ENCODE measurements at regions of chr7 and their contacts with region 1.

Region 1: GRCh38 chr7:24572997-24573625 is at the start of gene PALS2:
- DNase-seq: peak; percentile 81 to 87 (median 83)
- H3K4me3 ChIP-seq: peak within 1 kb of the TSS; percentile 62 to 66
- H3K4me3 Mint-ChIP-seq: peak within 1 kb of the TSS; percentile 92 to 99 (median 94)
- H3K27ac ChIP-seq: peak within 1 kb of the TSS; percentile 56
- H3K27ac Mint-ChIP-seq: peak within 1 kb of the TSS; percentile 86 to 95 (median 92)
- H3K4me1 ChIP-seq: peaks cover 32% of the 10 kb centered on the region
- H3K4me1 Mint-ChIP-seq: peaks cover 20 to 38% (median 28%) of the 10 kb centered on the region in 4 donors
- H3K27me3 ChIP-seq: no peaks in the 10 kb centered on the region
- H3K27me3 Mint-ChIP-seq: peaks cover 2 to 4% of the 10 kb centered on the region in 2 donors
- total RNA-seq, gene PALS2: 32.9 to 50.1 TPM

Region 2: GRCh38 chr7:22822486-22823141 is 1750.5 kb before region 1 on chr7 and contains the start of gene TOMM7:
- CTCF ChIA-PET with region 1: no interaction called
- POLR2A ChIA-PET with region 1: no interaction called
- intact Hi-C with region 1: loop called (anchors 5 kb)
- DNase-seq: peak; percentile 84 to 92 (median 91)
- H3K4me3 ChIP-seq: peak within 1 kb of the TSS; percentile 83 to 98
- H3K4me3 Mint-ChIP-seq: peak within 1 kb of the TSS; percentile 94 to 99 (median 98)
- H3K27ac ChIP-seq: peak within 1 kb of the TSS; percentile 85
- H3K27ac Mint-ChIP-seq: peak within 1 kb of the TSS; percentile 94 to 100 (median 98)
- H3K4me1 ChIP-seq: peaks cover 40% of the 10 kb centered on the region
- H3K4me1 Mint-ChIP-seq: peaks cover 19 to 50% (median 33%) of the 10 kb centered on the region in 4 donors
- H3K27me3 ChIP-seq: no peaks in the 10 kb centered on the region
- H3K27me3 Mint-ChIP-seq: peaks cover 5 to 17% of the 10 kb centered on the region in 2 donors
- total RNA-seq, gene TOMM7: 686 to 701 TPM

Region 3: GRCh38 chr7:23105644-23106056 is 1467.5 kb before region 1 on chr7 and contains the start of gene KLHL7:
- CTCF ChIA-PET with region 1: no interaction called
- POLR2A ChIA-PET with region 1: no interaction called
- intact Hi-C with region 1: loop called (anchors 10 kb)
- DNase-seq: peak; percentile 91 to 96 (median 93)
- H3K4me3 ChIP-seq: peak within 1 kb of the TSS; percentile 83 to 98
- H3K4me3 Mint-ChIP-seq: peak within 1 kb of the TSS; percentile 93 to 99 (median 97)
- H3K27ac ChIP-seq: peak within 1 kb of the TSS; percentile 89
- H3K27ac Mint-ChIP-seq: peak within 1 kb of the TSS; percentile 93 to 98 (median 96)
- H3K4me1 ChIP-seq: peaks cover 39% of the 10 kb centered on the region
- H3K4me1 Mint-ChIP-seq: peaks cover 28 to 56% (median 38%) of the 10 kb centered on the region in 4 donors
- H3K27me3 ChIP-seq: no peaks in the 10 kb centered on the region
- H3K27me3 Mint-ChIP-seq: no peaks in the 10 kb centered on the region
- total RNA-seq, gene KLHL7: 22.5 to 25.6 TPM

Region 4: DNA sequence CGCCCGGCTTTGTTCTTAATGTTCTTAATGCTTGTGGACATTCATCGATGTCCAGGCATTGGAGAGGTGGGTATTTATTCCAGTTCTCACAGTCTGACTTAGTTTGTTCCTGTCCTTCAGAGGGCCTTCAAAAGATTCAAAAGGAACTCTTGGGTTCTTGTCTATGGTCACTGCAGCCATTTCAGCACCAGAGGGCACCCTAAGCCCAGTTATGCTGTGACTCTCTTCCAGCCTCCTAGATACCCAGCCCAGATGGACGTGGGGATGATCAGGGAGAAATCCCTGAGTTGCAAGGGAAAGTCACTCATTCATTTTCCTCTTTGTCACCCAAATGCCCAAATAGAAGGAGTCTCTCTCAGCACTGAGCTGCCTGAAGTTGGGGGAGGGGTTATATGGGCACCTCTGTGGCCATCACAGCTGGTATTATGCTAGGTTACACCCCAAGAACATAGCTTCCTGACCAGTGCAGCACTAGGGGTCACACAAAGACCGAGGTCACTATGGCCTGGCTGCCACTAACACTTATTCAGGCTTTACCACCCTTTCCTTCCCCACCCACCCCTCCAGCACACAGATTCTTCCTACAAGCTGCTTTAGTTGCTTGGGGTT is 1002.4 kb before region 1 on chr7:
- CTCF ChIA-PET with region 1: no interaction called
- POLR2A ChIA-PET with region 1: no interaction called
- intact Hi-C with region 1: loop called (anchors 5 kb)
- DNase-seq: peak; percentile 44 to 65 (median 57)
- H3K4me3 ChIP-seq: no peak overlapping the region
- H3K4me3 Mint-ChIP-seq: peak overlapping the region in 2 of 8 donors; percentile 3 to 25
- H3K27ac ChIP-seq: no peak overlapping the region
- H3K27ac Mint-ChIP-seq: peak overlapping the region in 1 of 7 donors; percentile 5
- H3K4me1 ChIP-seq: no peaks in the 10 kb centered on the region
- H3K4me1 Mint-ChIP-seq: peaks cover 0 to 3% (median under 1%) of the 10 kb centered on the region in 4 donors
- H3K27me3 ChIP-seq: no peaks in the 10 kb centered on the region
- H3K27me3 Mint-ChIP-seq: peaks cover 10 to 14% of the 10 kb centered on the region in 2 donors

Region 5: GRCh38 chr7:23679898-23680413 is 893.2 kb before region 1 on chr7 and contains the start of gene FAM221A:
- CTCF ChIA-PET with region 1: no interaction called
- POLR2A ChIA-PET with region 1: no interaction called
- intact Hi-C with region 1: loop called (anchors 5 kb)
- DNase-seq: peak; percentile 71 to 86 (median 77)
- H3K4me3 ChIP-seq: peak within 1 kb of the TSS; percentile 79 to 83
- H3K4me3 Mint-ChIP-seq: peak within 1 kb of the TSS; percentile 93 to 97 (median 96)
- H3K27ac ChIP-seq: peak within 1 kb of the TSS; percentile 68
- H3K27ac Mint-ChIP-seq: peak within 1 kb of the TSS; percentile 78 to 93 (median 87)
- H3K4me1 ChIP-seq: peaks cover 4% of the 10 kb centered on the region
- H3K4me1 Mint-ChIP-seq: peaks cover 7 to 30% (median 16%) of the 10 kb centered on the region in 4 donors
- H3K27me3 ChIP-seq: no peaks in the 10 kb centered on the region
- H3K27me3 Mint-ChIP-seq: peaks cover 0 to 4% of the 10 kb centered on the region in 2 donors
- total RNA-seq, gene FAM221A: 6.8 to 7.3 TPM

Region 6: DNA sequence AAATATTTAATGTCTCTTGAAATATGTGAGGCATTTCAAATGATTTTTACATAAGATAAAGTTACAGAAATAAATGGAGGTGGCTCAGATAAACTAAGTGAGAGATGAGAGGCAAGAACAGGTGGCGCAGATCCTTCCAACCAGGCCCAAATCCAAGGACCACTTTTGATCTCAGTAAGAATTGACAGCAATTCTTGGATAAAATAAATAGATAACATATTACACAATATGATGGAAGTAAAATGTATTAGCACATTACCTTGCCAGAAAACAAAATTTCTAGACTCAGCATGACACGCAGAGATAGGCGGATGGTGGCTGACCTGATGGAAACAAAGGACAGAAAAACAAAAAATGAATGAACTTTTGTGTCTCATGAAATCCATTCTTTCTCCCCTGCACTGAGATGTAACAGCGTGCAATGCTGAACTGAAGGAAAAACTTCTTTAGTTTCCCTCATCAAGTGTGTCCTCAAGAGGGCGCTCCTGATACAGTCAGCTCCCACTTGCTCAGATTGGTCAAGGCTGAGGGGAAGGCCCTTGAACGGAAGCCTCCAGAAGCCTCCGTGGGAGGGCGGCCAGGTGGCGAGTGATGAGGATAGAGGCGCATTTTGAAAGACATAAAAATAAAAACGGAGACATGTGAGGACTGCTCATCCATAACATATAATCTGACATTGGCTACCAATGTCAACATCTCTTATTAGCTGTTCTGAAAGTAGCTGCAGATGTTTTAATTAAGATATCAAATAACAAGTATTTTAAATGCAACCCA is 247.0 kb after region 1 on chr7:
- CTCF ChIA-PET with region 1: no interaction called
- POLR2A ChIA-PET with region 1: no interaction called
- intact Hi-C with region 1: loop called (anchors 5 kb)
- DNase-seq: peak; percentile 70 to 81 (median 74)
- H3K4me3 ChIP-seq: peak overlapping the region in 1 of 2 donors; percentile 23
- H3K4me3 Mint-ChIP-seq: peak overlapping the region; percentile 78 to 90 (median 84)
- H3K27ac ChIP-seq: peak overlapping the region; percentile 78
- H3K27ac Mint-ChIP-seq: peak overlapping the region; percentile 88 to 100 (median 98)
- H3K4me1 ChIP-seq: peaks cover 42% of the 10 kb centered on the region
- H3K4me1 Mint-ChIP-seq: peaks cover 29 to 55% (median 42%) of the 10 kb centered on the region in 4 donors
- H3K27me3 ChIP-seq: no peaks in the 10 kb centered on the region
- H3K27me3 Mint-ChIP-seq: no peaks in the 10 kb centered on the region

Region 7: DNA sequence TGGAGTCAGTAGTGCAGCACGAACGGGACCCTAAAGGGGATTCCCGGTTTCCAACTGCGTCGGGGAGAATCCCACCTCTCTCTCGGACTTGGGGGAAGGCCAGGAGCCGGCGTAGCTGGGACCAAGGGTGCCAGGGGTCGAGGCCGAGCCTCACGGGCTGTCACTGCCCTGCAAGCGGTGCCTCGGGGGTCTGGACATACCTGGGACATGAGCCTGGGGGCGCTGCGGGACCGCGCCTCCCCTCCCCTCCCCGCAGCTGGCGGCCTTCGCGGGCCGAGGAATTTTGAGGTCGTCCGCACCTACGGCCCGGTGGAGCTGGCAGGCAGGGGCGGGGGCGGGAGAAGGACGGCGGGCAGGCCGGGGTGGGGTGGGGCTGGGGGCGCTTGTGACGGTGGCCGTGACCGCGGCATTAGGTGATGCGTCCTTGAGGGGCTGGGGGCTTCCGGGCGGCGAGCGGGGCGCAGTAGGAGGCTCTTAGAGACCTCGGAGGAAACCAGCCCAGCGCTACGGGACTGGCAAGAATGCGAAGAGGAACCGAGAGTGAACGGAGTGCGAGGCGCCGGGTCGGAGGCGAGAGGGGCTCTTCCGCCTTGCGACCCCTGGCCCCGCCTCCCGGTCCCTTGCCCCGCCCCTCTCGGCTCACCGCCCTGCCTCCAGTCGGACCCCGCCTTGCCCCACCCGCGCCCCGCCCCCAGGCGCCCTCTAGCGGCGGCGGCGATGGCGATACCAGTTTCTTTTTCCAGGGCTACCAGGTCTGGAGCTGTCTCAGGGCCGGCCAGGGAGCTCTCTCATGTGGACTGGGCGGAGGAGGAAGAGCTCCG is 606.9 kb after region 1 on chr7:
- CTCF ChIA-PET with region 1: no interaction called
- POLR2A ChIA-PET with region 1: no interaction called
- intact Hi-C with region 1: loop called (anchors 5 kb)
- DNase-seq: peak; percentile 90 to 95 (median 91)
- H3K4me3 ChIP-seq: peak overlapping the region; percentile 45 to 71
- H3K4me3 Mint-ChIP-seq: peak overlapping the region; percentile 88 to 95 (median 92)
- H3K27ac ChIP-seq: peak overlapping the region; percentile 68
- H3K27ac Mint-ChIP-seq: peak overlapping the region; percentile 76 to 96 (median 93)
- H3K4me1 ChIP-seq: peaks cover 12% of the 10 kb centered on the region
- H3K4me1 Mint-ChIP-seq: peaks cover 5 to 27% (median 18%) of the 10 kb centered on the region in 4 donors
- H3K27me3 ChIP-seq: no peaks in the 10 kb centered on the region
- H3K27me3 Mint-ChIP-seq: no peaks in the 10 kb centered on the region

Measured in CD4-positive, alpha-beta memory T cell (primary cell).